Right cardiac atrium (tissue), 5 donors: ENCODE measurements at regions of chr13 and their contacts with region 1.

Region 1: GRCh38 chr13:101109005-101109404 is 307.3 kb downstream of the NALCN start:
- DNase-seq: no peak
- ATAC-seq: no peak
- H3K4me3 ChIP-seq: no peak overlapping the region
- H3K27ac ChIP-seq: no peak overlapping the region
- H3K4me1 ChIP-seq: no peaks in the 10 kb centered on the region
- H3K27me3 ChIP-seq: no peaks in the 10 kb centered on the region

Region 2: GRCh38 chr13:100721885-100722512 is 387.0 kb before region 1 on chr13:
- intact Hi-C with region 1: loop called in 1 of 4 experiments (anchors 10 kb)
- DNase-seq: peak in 1 of 3 donors; percentile 45
- ATAC-seq: peak in 1 of 2 donors; percentile 61
- H3K4me3 ChIP-seq: no peak overlapping the region
- H3K27ac ChIP-seq: no peak overlapping the region
- H3K4me1 ChIP-seq: no peaks in the 10 kb centered on the region
- H3K27me3 ChIP-seq: no peaks in the 10 kb centered on the region

Region 3: GRCh38 chr13:100904293-100904976 is 204.6 kb before region 1 on chr13:
- intact Hi-C with region 1: no loop called
- DNase-seq: no peak
- ATAC-seq: no peak
- H3K4me3 ChIP-seq: no peak overlapping the region
- H3K27ac ChIP-seq: no peak overlapping the region
- H3K4me1 ChIP-seq: no peaks in the 10 kb centered on the region
- H3K27me3 ChIP-seq: no peaks in the 10 kb centered on the region